SK-N-SH (cell line): ENCODE measurements at regions of chr3 and their contacts with region 1.

Region 1: GRCh38 chr3:67113802-67114407 is 115.8 kb downstream of the KBTBD8 start:
- DNase-seq: peak; percentile 48
- H3K4me3 ChIP-seq: no peak overlapping the region
- H3K27ac ChIP-seq: no peak overlapping the region
- H3K4me1 ChIP-seq: no peaks in the 10 kb centered on the region
- H3K27me3 ChIP-seq: no peaks in the 10 kb centered on the region
- CTCF ChIP-seq: peak; percentile 96
- EP300 ChIP-seq: no peak
- RAD21 ChIP-seq: peak; percentile 81

Region 2: GRCh38 chr3:66971891-66972551 is 141.9 kb before region 1 on chr3:
- CTCF ChIA-PET with region 1: interaction called, 19 read pairs
- POLR2A ChIA-PET with region 1: no interaction called
- DNase-seq: peak; percentile 69
- H3K4me3 ChIP-seq: peak overlapping the region; percentile 24 to 45
- H3K27ac ChIP-seq: no peak overlapping the region
- H3K4me1 ChIP-seq: no peaks in the 10 kb centered on the region; a peak in 1 of 4 replicates
- H3K27me3 ChIP-seq: peaks cover 9% of the 10 kb centered on the region; the same call in 1 of the 2 replicates
- CTCF ChIP-seq: peak; percentile 81
- EP300 ChIP-seq: no peak
- RAD21 ChIP-seq: peak; percentile 83

Region 3: DNA sequence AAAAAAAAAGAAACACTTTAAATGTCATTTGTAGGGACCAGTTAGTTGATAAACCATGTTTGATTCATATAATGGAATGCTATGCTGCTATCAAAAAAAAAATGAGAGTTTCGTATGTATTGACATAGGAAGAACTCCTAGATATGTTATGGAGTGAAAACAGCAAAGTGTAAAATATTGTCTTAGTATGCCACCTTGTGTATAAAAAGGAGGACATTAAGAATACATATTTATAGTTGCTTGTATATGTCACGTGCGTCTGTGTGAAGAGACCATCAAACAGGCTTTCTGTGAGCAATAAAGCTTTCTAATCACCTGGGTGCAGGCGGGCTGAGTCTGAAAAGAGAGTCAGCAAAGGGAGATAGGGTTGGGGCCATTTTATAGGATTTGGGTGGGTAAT is 76.3 kb before region 1 on chr3:
- CTCF ChIA-PET with region 1: no interaction called
- POLR2A ChIA-PET with region 1: no interaction called
- DNase-seq: no peak
- H3K4me3 ChIP-seq: no peak overlapping the region
- H3K27ac ChIP-seq: no peak overlapping the region
- H3K4me1 ChIP-seq: no peaks in the 10 kb centered on the region
- H3K27me3 ChIP-seq: no peaks in the 10 kb centered on the region
- CTCF ChIP-seq: peak; percentile 18
- EP300 ChIP-seq: no peak
- RAD21 ChIP-seq: peak; percentile 23; the same call in 1 of the 2 replicates

Region 4: GRCh38 chr3:67123914-67124313 is 10.0 kb after region 1 on chr3:
- CTCF ChIA-PET with region 1: interaction called, 24 read pairs
- POLR2A ChIA-PET with region 1: no interaction called
- DNase-seq: no peak
- H3K4me3 ChIP-seq: no peak overlapping the region
- H3K27ac ChIP-seq: no peak overlapping the region
- H3K4me1 ChIP-seq: no peaks in the 10 kb centered on the region; a peak in 1 of 4 replicates
- H3K27me3 ChIP-seq: no peaks in the 10 kb centered on the region
- CTCF ChIP-seq: no peak
- EP300 ChIP-seq: no peak
- RAD21 ChIP-seq: no peak

Region 5: DNA sequence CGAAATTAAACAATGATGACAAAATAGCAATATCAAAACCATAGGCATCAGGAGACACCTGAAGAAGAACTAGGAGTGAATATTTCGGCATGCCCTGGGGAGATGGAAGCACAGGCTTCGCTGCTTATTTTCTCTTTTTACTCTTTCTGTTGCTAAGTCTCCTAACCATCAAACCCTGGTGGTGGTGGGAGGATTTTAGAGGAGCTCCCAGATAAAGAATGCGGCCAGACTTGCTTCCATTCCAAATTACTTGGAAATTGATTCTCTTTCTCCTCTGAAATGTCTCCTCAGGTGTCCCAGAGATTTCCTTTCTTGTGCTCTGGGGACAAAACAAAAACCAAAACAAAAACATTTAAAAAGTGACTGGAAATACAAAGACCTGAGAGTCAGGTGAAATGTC is 127.2 kb after region 1 on chr3:
- CTCF ChIA-PET with region 1: no interaction called
- POLR2A ChIA-PET with region 1: no interaction called
- DNase-seq: no peak
- H3K4me3 ChIP-seq: no peak overlapping the region
- H3K27ac ChIP-seq: no peak overlapping the region
- H3K4me1 ChIP-seq: no peaks in the 10 kb centered on the region
- H3K27me3 ChIP-seq: no peaks in the 10 kb centered on the region
- CTCF ChIP-seq: no peak
- EP300 ChIP-seq: no peak
- RAD21 ChIP-seq: no peak

Region 6: GRCh38 chr3:67790043-67790442 is 676.1 kb after region 1 on chr3:
- CTCF ChIA-PET with region 1: interaction called, 17 read pairs
- POLR2A ChIA-PET with region 1: no interaction called
- DNase-seq: peak; percentile 56
- H3K4me3 ChIP-seq: no peak overlapping the region
- H3K27ac ChIP-seq: no peak overlapping the region
- H3K4me1 ChIP-seq: no peaks in the 10 kb centered on the region
- H3K27me3 ChIP-seq: no peaks in the 10 kb centered on the region
- CTCF ChIP-seq: peak; percentile 67
- EP300 ChIP-seq: no peak
- RAD21 ChIP-seq: peak; percentile 94